T-cell (primary cell): ENCODE measurements at regions of chr7 and their contacts with region 1.

Region 1: GRCh38 chr7:4775250-4775847 is at the start of gene AP5Z1:
- DNase-seq: peak; percentile 82 to 98 (median 95)
- ATAC-seq: peak; percentile 91 to 93 (median 92)
- H3K4me3 ChIP-seq: peak within 1 kb of the TSS; percentile 91 to 94
- H3K4me3 Mint-ChIP-seq: peak within 1 kb of the TSS; percentile 98
- H3K27ac ChIP-seq: peak within 1 kb of the TSS; percentile 95
- H3K27ac Mint-ChIP-seq: peak within 1 kb of the TSS; percentile 97 to 99
- H3K4me1 ChIP-seq: peaks cover 16 to 36% of the 10 kb centered on the region in 2 experiments
- H3K4me1 Mint-ChIP-seq: peaks cover 48 to 56% (median 50%) of the 10 kb centered on the region in 3 donors
- H3K27me3 ChIP-seq: no peaks in the 10 kb centered on the region
- H3K27me3 Mint-ChIP-seq: peaks cover 0 to 2% of the 10 kb centered on the region in 2 donors
- total RNA-seq, gene AP5Z1: 93.6 to 126 (median 110) TPM

Region 2: DNA sequence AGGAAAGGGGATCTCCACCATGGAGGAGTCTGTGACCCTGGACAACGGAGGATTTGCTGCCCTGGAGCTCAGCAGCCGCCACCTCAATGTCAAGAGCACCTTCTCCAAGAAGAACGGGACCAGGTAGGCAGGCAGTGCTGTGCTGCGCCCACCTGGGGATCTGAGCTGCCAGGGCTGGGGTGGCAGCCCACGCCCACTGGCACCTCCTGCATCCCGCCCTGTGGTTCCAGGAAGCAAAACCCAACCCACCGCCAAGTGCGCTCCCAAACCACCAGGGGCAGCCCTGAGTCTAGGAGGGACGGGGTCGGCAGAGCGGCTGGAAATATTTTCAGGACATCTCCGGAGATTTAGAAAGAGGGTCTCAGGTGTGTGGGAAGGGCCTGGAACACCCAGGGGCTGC is 533.6 kb before region 1 on chr7:
- CTCF ChIA-PET with region 1: no interaction called
- POLR2A ChIA-PET with region 1: no interaction called
- DNase-seq: no peak
- ATAC-seq: no peak
- H3K4me3 ChIP-seq: no peak overlapping the region
- H3K4me3 Mint-ChIP-seq: no peak overlapping the region
- H3K27ac ChIP-seq: no peak overlapping the region
- H3K27ac Mint-ChIP-seq: no peak overlapping the region
- H3K4me1 ChIP-seq: no peaks in the 10 kb centered on the region
- H3K4me1 Mint-ChIP-seq: peaks cover 9% of the 10 kb centered on the region in 3 donors
- H3K27me3 ChIP-seq: peaks cover 0 to 2% of the 10 kb centered on the region in 2 experiments
- H3K27me3 Mint-ChIP-seq: no peaks in the 10 kb centered on the region

Region 3: GRCh38 chr7:4641667-4642467 is 133.5 kb before region 1 on chr7:
- CTCF ChIA-PET with region 1: interaction called in 1 of 2 experiments, 12 read pairs
- POLR2A ChIA-PET with region 1: interaction called in 1 of 2 experiments, 5 read pairs
- DNase-seq: peak; percentile 88 to 99 (median 95)
- ATAC-seq: peak; percentile 80 to 88 (median 85)
- H3K4me3 ChIP-seq: peak overlapping the region; percentile 79 to 85
- H3K4me3 Mint-ChIP-seq: peak overlapping the region; percentile 86 to 88 (median 88)
- H3K27ac ChIP-seq: peak overlapping the region; percentile 93
- H3K27ac Mint-ChIP-seq: peak overlapping the region; percentile 95 to 97
- H3K4me1 ChIP-seq: peaks cover 7 to 19% of the 10 kb centered on the region in 2 experiments
- H3K4me1 Mint-ChIP-seq: peaks cover 14 to 20% (median 18%) of the 10 kb centered on the region in 3 donors
- H3K27me3 ChIP-seq: peaks cover 0 to 3% of the 10 kb centered on the region in 2 experiments
- H3K27me3 Mint-ChIP-seq: no peaks in the 10 kb centered on the region

Region 4: GRCh38 chr7:4791738-4792536 is 16.6 kb after region 1 on chr7:
- CTCF ChIA-PET with region 1: interaction called in 1 of 2 experiments, 13 read pairs
- POLR2A ChIA-PET with region 1: no interaction called
- DNase-seq: peak in 34 of 35 experiments; percentile 52 to 88 (median 76)
- ATAC-seq: peak; percentile 81 to 87 (median 84)
- H3K4me3 ChIP-seq: peak overlapping the region; percentile 49 to 67
- H3K4me3 Mint-ChIP-seq: peak overlapping the region in 2 of 3 donors; percentile 31 to 37
- H3K27ac ChIP-seq: no peak overlapping the region
- H3K27ac Mint-ChIP-seq: no peak overlapping the region
- H3K4me1 ChIP-seq: peaks cover 0 to 15% of the 10 kb centered on the region in 2 experiments
- H3K4me1 Mint-ChIP-seq: peaks cover 5 to 10% (median 6%) of the 10 kb centered on the region in 3 donors
- H3K27me3 ChIP-seq: no peaks in the 10 kb centered on the region
- H3K27me3 Mint-ChIP-seq: no peaks in the 10 kb centered on the region

Region 5: DNA sequence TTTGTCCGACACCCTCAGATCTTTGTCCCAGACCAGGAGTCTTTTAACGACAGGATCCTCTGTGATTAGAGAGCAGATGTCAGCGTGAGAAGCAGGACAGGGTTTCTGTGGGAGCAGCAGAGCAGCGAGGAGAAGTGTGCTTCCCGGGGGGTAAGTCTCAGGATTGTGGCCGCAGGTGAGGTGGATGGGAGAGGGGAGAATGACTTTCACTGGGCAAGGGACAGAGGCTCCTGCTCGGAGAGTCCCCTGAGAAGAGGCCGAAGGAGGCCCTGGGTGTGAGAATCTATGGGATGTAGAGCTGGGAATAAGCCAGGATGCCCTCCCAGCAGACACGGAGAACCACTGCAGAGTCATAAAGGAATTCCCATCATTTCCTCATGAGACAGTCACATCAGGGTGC is 259.9 kb after region 1 on chr7:
- CTCF ChIA-PET with region 1: no interaction called
- POLR2A ChIA-PET with region 1: no interaction called
- DNase-seq: no peak
- ATAC-seq: no peak
- H3K4me3 ChIP-seq: no peak overlapping the region
- H3K4me3 Mint-ChIP-seq: no peak overlapping the region
- H3K27ac ChIP-seq: no peak overlapping the region
- H3K27ac Mint-ChIP-seq: no peak overlapping the region
- H3K4me1 ChIP-seq: no peaks in the 10 kb centered on the region
- H3K4me1 Mint-ChIP-seq: no peaks in the 10 kb centered on the region
- H3K27me3 ChIP-seq: no peaks in the 10 kb centered on the region
- H3K27me3 Mint-ChIP-seq: no peaks in the 10 kb centered on the region